ENCODE measurements at regions of chr19 and their contacts with region 1.

Region 1: DNA sequence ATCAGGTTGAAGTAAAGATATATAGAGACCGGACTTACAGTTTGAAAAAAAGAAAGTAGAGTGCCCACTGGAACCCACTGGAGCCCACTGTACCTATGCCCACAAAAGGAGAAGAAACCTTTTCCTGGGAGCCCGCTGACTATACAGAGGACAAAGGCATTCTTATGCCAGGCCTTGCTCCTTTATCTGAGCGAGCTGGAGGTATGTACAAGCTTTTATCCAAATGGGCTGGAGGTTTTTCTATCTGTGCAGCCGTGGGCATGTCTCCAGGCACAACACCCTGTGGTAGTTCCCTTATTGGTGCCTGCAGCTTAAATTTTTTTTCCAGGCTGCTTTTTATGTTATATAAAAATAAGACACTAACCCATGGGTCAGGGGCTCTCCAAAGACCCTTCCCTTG is 8.4 kb downstream of the ZNF234 start:
- DNase-seq: no peak
- H3K4me3 ChIP-seq: no peak overlapping the region
- H3K27ac ChIP-seq: no peak overlapping the region
- H3K4me1 ChIP-seq: no peaks in the 10 kb centered on the region
- H3K27me3 ChIP-seq: no peaks in the 10 kb centered on the region
- CTCF ChIP-seq: no peak

Region 2: GRCh38 chr19:44042147-44042546 is 107.6 kb before region 1 on chr19:
- CTCF ChIA-PET with region 1: no interaction called
- POLR2A ChIA-PET with region 1: interaction called, 15 read pairs
- intact Hi-C with region 1: no loop called
- DNase-seq: no peak
- H3K4me3 ChIP-seq: no peak overlapping the region
- H3K27ac ChIP-seq: no peak overlapping the region
- H3K4me1 ChIP-seq: no peaks in the 10 kb centered on the region
- H3K27me3 ChIP-seq: peaks cover 50% of the 10 kb centered on the region
- CTCF ChIP-seq: no peak

Region 3: DNA sequence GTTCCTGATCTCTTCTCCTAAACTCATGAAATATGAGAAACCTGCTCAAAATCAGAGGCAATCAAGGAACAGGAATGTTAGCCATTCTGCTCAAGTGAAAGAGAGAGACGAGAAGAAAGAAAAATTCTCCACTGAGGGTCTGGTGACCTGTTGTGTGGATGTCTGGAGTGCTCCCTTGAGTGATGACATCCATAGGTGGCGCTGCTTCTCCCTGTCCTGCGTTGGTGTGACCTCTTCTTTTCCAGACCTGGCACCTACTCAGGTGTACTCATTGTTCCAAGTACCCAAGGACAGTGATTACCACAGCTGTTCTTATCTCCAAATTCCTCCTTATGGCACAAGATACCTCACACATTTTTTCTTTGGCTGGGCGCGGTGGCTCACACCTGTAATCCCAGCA is 93.9 kb before region 1 on chr19:
- CTCF ChIA-PET with region 1: no interaction called
- POLR2A ChIA-PET with region 1: no interaction called
- intact Hi-C with region 1: no loop called
- DNase-seq: no peak
- H3K4me3 ChIP-seq: no peak overlapping the region
- H3K27ac ChIP-seq: no peak overlapping the region
- H3K4me1 ChIP-seq: peaks cover 7% of the 10 kb centered on the region; the same call in 1 of the 2 replicates
- H3K27me3 ChIP-seq: no peaks in the 10 kb centered on the region
- CTCF ChIP-seq: no peak

Region 4: DNA sequence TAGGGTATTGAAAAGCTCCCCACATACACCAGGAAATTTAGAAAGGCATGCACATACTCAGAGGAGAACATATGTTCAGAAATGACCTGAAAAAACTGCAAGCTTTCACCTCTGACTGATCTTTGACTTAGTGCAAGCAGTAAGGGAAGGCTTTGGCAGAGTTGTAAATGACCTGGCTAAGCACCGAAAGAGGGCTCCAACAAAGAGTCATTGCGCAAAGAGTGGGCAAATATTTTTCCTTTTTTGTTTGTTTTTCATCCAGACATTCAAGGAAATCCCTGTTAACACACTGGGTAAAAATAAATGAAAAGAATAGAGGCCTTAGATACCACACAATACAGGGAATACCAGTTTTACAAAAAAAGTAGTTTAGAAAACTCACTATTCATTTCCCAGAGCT is 104.7 kb after region 1 on chr19:
- CTCF ChIA-PET with region 1: no interaction called
- POLR2A ChIA-PET with region 1: no interaction called
- intact Hi-C with region 1: no loop called
- DNase-seq: no peak
- H3K4me3 ChIP-seq: no peak overlapping the region
- H3K27ac ChIP-seq: no peak overlapping the region
- H3K4me1 ChIP-seq: no peaks in the 10 kb centered on the region
- H3K27me3 ChIP-seq: no peaks in the 10 kb centered on the region
- CTCF ChIP-seq: no peak